CD8-positive, alpha-beta memory T cell (primary cell): ENCODE measurements at regions of chr5 and their contacts with region 1.

Region 1: DNA sequence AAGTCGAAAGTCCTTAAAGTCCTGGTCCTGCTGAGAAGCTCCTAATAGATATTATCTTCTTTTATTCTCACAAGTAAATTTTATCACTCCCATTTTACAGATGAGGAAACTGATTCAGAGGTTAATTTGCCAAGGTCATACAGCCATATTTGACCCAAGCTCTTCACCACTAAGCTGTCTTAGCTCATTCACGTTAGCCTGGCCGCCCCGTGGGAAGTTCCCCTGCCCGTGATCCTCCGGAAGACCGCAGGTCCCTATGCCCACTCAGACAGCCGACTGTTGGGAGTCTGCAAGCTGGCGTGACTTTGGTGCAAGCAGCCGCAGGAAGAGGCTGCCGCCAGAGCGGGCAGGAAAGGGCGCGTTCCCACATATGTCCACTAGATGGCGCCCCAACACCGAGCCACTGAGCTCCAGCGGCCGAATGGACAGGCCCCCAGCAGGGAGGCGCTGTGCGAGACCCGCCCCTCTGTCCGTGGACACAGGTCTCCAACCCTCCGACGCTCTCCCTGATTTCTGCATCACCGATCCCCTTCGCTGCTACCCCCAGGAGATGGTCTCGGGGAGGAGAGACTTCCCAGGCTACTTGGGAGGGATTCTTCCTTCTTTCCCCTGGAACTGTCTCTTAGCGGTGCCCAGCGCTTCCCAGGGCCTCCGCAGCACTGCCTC is 10.0 kb upstream of the ARAP3 start:
- DNase-seq: peak; percentile 74 to 88 (median 79)
- H3K4me3 ChIP-seq: peak overlapping the region; percentile 56
- H3K4me3 Mint-ChIP-seq: peak overlapping the region; percentile 70 to 85 (median 78)
- H3K27ac ChIP-seq: peak overlapping the region; percentile 4
- H3K27ac Mint-ChIP-seq: peak overlapping the region in 6 of 8 donors; percentile 17 to 92 (median 75)
- H3K4me1 ChIP-seq: peaks cover 15% of the 10 kb centered on the region
- H3K4me1 Mint-ChIP-seq: peaks cover 20 to 24% (median 20%) of the 10 kb centered on the region in 3 donors
- H3K27me3 ChIP-seq: no peaks in the 10 kb centered on the region
- H3K27me3 Mint-ChIP-seq: peaks cover 8 to 13% of the 10 kb centered on the region in 2 donors

Region 2: DNA sequence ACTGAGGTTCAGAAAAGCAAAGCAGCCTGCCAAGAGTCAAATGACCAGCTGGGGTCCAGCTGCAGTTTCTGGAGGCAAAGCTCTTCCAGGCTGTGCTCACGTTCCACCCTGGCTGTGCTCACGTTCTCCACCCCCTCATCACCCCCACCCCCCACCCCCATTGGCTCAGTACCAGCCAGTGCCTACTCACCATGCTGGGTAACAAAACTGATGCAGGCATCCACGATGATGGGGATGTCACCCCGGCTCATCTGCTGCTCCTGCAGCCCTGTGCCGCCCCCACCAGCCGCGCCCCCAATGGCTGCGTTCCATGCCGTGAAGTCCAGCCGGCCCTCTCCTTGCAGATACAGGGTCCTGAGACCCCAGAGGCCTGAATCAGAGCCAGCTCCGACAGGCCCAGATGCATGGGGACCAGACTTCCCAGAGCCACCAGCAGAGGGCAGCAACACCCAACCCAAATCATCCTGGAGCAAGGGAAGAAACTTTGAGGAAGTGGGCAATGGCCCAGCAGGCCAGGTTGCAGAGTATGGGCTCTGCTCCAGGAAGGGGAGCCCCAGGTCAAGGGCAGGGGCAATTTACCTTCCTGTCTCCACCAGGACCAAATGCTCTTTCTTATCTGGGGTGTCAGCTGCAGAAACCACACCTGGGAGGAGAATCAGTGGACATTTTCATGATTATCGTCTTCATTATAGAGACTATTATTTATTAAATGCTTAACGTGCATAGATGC is 27.1 kb before region 1 on chr5:
- CTCF ChIA-PET with region 1: interaction called, 57 read pairs
- POLR2A ChIA-PET with region 1: no interaction called
- DNase-seq: peak; percentile 49 to 79 (median 62)
- H3K4me3 ChIP-seq: no peak overlapping the region
- H3K4me3 Mint-ChIP-seq: no peak overlapping the region
- H3K27ac ChIP-seq: no peak overlapping the region
- H3K27ac Mint-ChIP-seq: no peak overlapping the region
- H3K4me1 ChIP-seq: no peaks in the 10 kb centered on the region
- H3K4me1 Mint-ChIP-seq: peaks cover 4 to 5% (median 4%) of the 10 kb centered on the region in 3 donors
- H3K27me3 ChIP-seq: no peaks in the 10 kb centered on the region
- H3K27me3 Mint-ChIP-seq: peaks cover 0 to 2% of the 10 kb centered on the region in 2 donors

Region 3: GRCh38 chr5:141771031-141771430 is 79.0 kb after region 1 on chr5:
- CTCF ChIA-PET with region 1: no interaction called
- POLR2A ChIA-PET with region 1: no interaction called
- DNase-seq: no peak
- H3K4me3 ChIP-seq: no peak overlapping the region
- H3K4me3 Mint-ChIP-seq: no peak overlapping the region
- H3K27ac ChIP-seq: no peak overlapping the region
- H3K27ac Mint-ChIP-seq: peak overlapping the region in 1 of 8 donors; percentile 21
- H3K4me1 ChIP-seq: no peaks in the 10 kb centered on the region
- H3K4me1 Mint-ChIP-seq: no peaks in the 10 kb centered on the region
- H3K27me3 ChIP-seq: no peaks in the 10 kb centered on the region
- H3K27me3 Mint-ChIP-seq: peaks cover 3 to 4% of the 10 kb centered on the region in 2 donors

Region 4: DNA sequence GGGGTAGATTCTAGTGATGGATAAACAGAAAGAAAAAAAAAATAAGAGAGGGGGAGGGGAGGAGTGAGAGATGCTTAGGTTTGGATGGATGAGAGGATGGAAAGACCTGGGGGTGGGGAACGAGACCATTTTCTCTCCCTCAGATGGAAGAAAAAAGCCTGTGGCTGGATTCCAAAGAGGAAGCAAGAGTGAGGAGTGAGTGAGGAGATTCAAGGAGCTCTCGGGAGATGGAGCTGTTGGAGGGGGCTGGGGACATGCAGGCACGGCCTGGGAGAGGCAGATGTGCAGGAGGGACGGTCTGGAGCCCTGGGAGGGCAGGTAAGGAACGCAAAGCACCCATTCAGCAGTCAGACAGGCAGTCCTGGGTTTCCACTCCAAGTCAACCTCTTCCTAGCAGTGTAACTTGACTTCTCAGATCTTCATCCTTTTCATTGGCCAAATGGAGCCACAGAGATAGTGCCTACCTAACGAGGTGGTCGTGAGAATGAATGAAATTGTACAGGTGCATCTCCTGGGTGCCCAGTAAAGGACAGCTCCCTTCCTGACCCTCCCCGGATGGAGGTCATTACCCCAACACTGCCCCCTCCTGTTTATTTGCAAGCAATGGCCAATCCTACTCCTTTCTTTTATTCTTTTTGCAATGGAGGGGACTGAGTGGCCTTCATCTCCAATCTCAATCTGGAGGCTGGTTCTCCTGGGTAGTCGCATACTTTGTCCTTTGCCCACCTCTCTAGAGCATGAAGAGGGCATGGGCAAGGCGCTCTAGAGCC is 134.0 kb after region 1 on chr5:
- CTCF ChIA-PET with region 1: interaction called, 24 read pairs
- POLR2A ChIA-PET with region 1: no interaction called
- DNase-seq: no peak
- H3K4me3 ChIP-seq: no peak overlapping the region
- H3K4me3 Mint-ChIP-seq: no peak overlapping the region
- H3K27ac ChIP-seq: no peak overlapping the region
- H3K27ac Mint-ChIP-seq: no peak overlapping the region
- H3K4me1 ChIP-seq: no peaks in the 10 kb centered on the region
- H3K4me1 Mint-ChIP-seq: no peaks in the 10 kb centered on the region
- H3K27me3 ChIP-seq: no peaks in the 10 kb centered on the region
- H3K27me3 Mint-ChIP-seq: peaks cover 1 to 13% of the 10 kb centered on the region in 2 donors

Region 5: DNA sequence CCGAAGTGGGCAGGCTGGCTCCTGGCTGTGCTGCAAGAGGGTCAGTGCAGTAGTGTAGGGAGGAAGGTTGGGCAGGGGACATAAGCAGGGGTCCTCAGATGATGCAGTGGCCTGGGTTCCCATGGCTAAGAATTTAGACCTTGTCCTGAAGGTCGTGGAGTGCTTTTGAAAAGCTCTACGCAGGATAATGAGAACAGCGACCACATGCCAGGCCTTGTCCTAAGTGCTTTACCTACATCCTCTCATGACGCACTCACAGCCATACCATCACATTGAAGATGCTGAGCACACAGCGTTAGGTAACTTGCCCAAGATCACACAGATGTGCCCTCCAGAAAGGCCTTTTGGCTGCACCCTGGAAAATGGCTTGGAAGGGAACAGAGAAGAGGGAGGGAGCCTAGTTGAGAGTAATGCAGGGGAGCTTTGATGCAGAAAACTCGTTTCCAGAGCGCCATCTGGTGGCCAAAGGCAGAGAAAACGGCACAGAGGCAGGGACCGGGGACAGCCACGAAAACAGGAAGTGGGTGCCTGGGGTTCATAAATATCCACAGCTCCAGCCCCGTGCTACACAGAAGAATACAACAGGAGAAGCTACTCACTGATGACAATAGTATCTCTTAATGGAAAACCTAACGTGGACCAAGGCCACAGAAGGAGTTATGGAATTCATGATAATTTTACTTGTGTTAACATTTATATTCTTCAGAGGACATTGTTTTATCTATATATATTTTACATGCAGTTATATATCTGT is 268.6 kb after region 1 on chr5:
- CTCF ChIA-PET with region 1: interaction called, 100 read pairs
- POLR2A ChIA-PET with region 1: interaction called, 18 read pairs
- DNase-seq: peak; percentile 82 to 91 (median 84)
- H3K4me3 ChIP-seq: peak overlapping the region; percentile 28
- H3K4me3 Mint-ChIP-seq: peak overlapping the region; percentile 6 to 76 (median 52)
- H3K27ac ChIP-seq: no peak overlapping the region
- H3K27ac Mint-ChIP-seq: peak overlapping the region; percentile 8 to 92 (median 84)
- H3K4me1 ChIP-seq: peaks cover 39% of the 10 kb centered on the region
- H3K4me1 Mint-ChIP-seq: peaks cover 42 to 50% (median 48%) of the 10 kb centered on the region in 3 donors
- H3K27me3 ChIP-seq: no peaks in the 10 kb centered on the region
- H3K27me3 Mint-ChIP-seq: no peaks in the 10 kb centered on the region

Region 6: DNA sequence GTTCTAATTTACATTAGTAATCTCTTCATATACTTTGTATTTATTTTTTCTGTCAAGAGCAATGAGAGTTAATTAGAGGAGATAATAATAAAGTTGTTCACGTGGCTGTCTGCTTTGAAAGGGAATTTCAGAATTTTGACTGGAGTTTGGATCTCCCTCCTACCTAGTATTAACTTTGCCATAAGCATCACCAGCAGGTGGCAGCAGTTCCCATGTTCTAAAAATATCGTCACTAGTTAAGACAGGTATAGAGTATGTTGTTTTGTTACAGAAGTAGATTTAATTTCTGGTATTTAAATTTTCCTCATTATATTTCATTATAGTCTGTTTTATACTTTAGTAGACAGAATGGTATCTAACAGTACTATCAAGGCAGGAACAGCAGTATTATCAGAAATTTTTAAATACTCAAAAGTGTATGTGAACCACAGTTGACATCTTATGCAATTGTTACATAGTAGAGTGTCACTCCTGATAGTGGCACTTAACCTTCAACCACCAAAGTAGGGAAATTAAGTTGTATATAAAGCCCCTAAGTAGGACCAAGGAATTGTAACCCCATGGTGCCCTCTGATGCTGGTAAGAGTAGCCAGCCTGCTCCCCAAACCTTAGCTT is 300.5 kb after region 1 on chr5:
- CTCF ChIA-PET with region 1: interaction called, 10 read pairs
- POLR2A ChIA-PET with region 1: interaction called, 3 read pairs
- DNase-seq: peak; percentile 53 to 80 (median 68)
- H3K4me3 ChIP-seq: no peak overlapping the region
- H3K4me3 Mint-ChIP-seq: no peak overlapping the region
- H3K27ac ChIP-seq: no peak overlapping the region
- H3K27ac Mint-ChIP-seq: peak overlapping the region in 2 of 8 donors; percentile 0 to 11
- H3K4me1 ChIP-seq: peaks cover 9% of the 10 kb centered on the region
- H3K4me1 Mint-ChIP-seq: peaks cover 3 to 14% (median 5%) of the 10 kb centered on the region in 3 donors
- H3K27me3 ChIP-seq: no peaks in the 10 kb centered on the region
- H3K27me3 Mint-ChIP-seq: peaks cover 0 to 1% of the 10 kb centered on the region in 2 donors

Region 7: DNA sequence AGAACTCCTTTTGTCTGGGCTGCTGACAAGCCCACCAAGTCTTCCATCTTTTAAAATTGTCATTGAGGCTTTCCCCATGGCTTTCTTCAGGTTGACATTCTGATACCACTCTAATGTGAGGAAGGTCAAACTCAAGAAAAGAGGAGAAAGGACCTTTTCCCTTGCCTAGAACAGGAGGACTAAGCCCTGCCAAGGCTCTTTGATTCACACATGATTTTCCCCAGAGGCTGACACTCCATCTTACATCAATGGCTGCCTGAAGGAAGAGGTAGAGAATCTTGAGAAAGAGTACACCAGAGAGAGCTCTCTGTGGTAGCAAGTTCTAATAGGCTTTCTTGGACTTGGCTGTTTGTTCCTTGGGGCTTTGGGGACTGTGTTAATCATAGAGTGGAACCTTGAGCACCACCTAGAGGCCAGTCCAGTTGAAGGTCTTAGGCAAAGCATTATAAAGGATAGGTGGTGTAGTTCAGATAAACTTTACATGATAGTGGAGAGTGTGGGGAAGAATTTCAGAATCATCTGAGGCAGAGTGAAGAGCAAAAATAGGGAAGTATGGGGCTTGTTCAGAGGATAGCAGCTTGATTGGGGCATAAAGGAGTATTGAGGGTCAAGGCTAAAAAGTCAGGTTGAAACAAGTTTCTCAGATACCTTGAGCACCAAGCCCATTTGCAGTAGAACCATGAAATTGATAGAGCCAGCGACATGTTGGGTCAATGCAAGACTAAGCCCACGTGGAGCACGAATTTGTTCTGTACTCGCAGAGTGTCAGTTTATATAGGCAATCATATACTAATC is 453.3 kb after region 1 on chr5:
- CTCF ChIA-PET with region 1: interaction called, 21 read pairs
- POLR2A ChIA-PET with region 1: no interaction called
- DNase-seq: peak; percentile 17 to 70 (median 35)
- H3K4me3 ChIP-seq: no peak overlapping the region
- H3K4me3 Mint-ChIP-seq: no peak overlapping the region
- H3K27ac ChIP-seq: no peak overlapping the region
- H3K27ac Mint-ChIP-seq: peak overlapping the region in 1 of 8 donors; percentile 42
- H3K4me1 ChIP-seq: no peaks in the 10 kb centered on the region
- H3K4me1 Mint-ChIP-seq: peaks cover 0 to 4% (median 0%) of the 10 kb centered on the region in 3 donors
- H3K27me3 ChIP-seq: no peaks in the 10 kb centered on the region
- H3K27me3 Mint-ChIP-seq: no peaks in the 10 kb centered on the region